ENCODE measurements at regions of chr11 and their contacts with region 1.

Region 1: GRCh38 chr11:36702330-36703055 is 104.5 kb upstream of the RAG2 start:
- DNase-seq: peak in 3 of 6 donors; percentile 21 to 52 (median 22)
- ATAC-seq: peak; percentile 89 to 94 (median 92)
- H3K4me3 ChIP-seq: no peak overlapping the region
- H3K27ac ChIP-seq: no peak overlapping the region
- H3K4me1 ChIP-seq: no peaks in the 10 kb centered on the region
- H3K27me3 ChIP-seq: no peaks in the 10 kb centered on the region
- CTCF ChIP-seq: peak; percentile 57 to 76 (median 68)

Region 2: GRCh38 chr11:36594316-36594989 is 108.0 kb before region 1 on chr11 and contains the start of gene IFTAP:
- intact Hi-C with region 1: no loop called
- DNase-seq: peak; percentile 42 to 69 (median 60)
- ATAC-seq: peak; percentile 100
- H3K4me3 ChIP-seq: peak within 1 kb of the TSS; percentile 49 to 76 (median 55)
- H3K27ac ChIP-seq: peak within 1 kb of the TSS; percentile 11 to 46 (median 30)
- H3K4me1 ChIP-seq: peaks cover 0 to 9% (median 7%) of the 10 kb centered on the region in 3 donors
- H3K27me3 ChIP-seq: peaks cover 0 to 11% (median 3%) of the 10 kb centered on the region in 4 donors
- CTCF ChIP-seq: no peak
- total RNA-seq, gene IFTAP: 4.2 to 10.6 (median 6.7) TPM

Region 3: GRCh38 chr11:36746886-36747710 is 44.6 kb after region 1 on chr11:
- intact Hi-C with region 1: loop called in 1 of 3 experiments (anchors 5 kb)
- DNase-seq: peak; percentile 80 to 91 (median 82)
- ATAC-seq: peak; percentile 95 to 100 (median 99)
- H3K4me3 ChIP-seq: no peak overlapping the region
- H3K27ac ChIP-seq: no peak overlapping the region
- H3K4me1 ChIP-seq: peaks cover 0 to 5% (median 0%) of the 10 kb centered on the region in 3 donors
- H3K27me3 ChIP-seq: peaks cover 0 to 3% (median 0%) of the 10 kb centered on the region in 4 donors
- CTCF ChIP-seq: peak; percentile 94 to 99 (median 96)

Region 4: GRCh38 chr11:36831440-36831839 is 128.9 kb after region 1 on chr11:
- intact Hi-C with region 1: no loop called
- DNase-seq: no peak
- ATAC-seq: no peak
- H3K4me3 ChIP-seq: no peak overlapping the region
- H3K27ac ChIP-seq: no peak overlapping the region
- H3K4me1 ChIP-seq: no peaks in the 10 kb centered on the region
- H3K27me3 ChIP-seq: no peaks in the 10 kb centered on the region
- CTCF ChIP-seq: no peak

Measured in pancreas (tissue), 10 donors.